Activated CD4-positive, alpha-beta memory T cell treated with anti-CD3 and anti-CD28 coated beads, Interleukin-2, amount 10 ng/mL, durations not matched to agents 7 days and 5 days (primary cell): ENCODE measurements at regions of chr14 and their contacts with region 1.

Region 1: DNA sequence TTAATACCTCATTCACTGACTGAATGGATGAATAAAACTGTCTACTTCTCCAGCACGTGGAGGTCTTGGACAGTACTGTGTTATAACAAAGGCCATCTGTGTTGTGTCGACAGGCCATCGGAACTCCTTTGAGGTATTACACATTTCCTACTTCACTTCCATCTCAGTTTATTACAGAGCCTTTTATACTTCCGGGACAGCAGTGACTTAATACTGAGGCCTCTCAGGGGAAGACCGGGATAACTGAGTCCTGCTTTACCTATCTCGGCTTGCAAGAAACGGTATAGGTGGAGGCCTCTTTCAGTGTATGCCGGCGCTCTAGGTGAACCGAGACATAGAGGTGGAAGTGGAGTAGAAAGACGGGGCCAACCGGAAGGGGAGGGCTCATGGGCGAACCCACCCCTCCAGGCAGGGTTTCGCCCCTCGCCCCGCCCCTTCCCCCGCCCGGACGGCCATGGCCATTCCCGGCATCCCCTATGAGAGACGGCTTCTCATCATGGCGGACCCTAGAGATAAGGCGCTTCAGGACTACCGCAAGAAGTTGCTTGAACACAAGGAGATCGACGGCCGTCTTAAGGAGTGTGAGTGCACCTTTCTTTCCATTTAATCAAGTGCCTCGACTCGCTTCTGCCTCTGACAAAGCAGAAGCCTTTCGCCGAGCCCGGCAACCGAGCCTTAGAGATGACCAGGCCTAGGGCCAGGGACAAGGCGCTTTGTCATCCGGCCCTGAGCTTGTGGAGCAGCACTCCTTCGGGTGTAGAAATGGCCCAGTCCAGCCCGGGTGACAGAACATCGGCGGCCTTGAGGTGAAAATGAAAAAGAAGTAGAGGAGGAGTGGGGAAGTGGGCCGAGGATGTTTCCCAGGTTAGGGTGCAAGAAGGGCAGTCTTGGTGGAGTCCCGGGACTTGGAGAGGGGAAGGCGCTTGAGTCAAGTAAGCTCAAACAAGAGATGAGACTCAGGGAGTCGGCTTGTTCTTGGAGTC is at the start of gene PSMC6:
- DNase-seq: peak; percentile 95
- H3K4me3 Mint-ChIP-seq: peak within 1 kb of the TSS; percentile 92
- H3K27ac Mint-ChIP-seq: peak within 1 kb of the TSS; percentile 91
- H3K4me1 Mint-ChIP-seq: peaks cover 52% of the 10 kb centered on the region
- H3K27me3 Mint-ChIP-seq: no peaks in the 10 kb centered on the region
- total RNA-seq, gene PSMC6: 78.3 to 80.8 TPM

Region 2: DNA sequence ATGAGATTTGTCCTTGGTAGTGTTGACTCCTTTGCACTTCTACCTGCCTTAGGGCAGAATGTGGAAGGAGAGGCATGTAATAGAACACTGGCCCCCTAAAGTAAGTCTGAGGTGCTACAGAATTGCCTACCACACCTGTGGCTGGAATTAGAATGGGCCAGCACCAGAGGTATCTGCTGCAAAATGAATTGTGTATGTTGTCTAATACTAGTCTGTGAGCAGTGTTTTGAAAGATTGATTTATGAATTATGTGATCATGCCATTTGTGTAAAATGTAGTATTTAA is 17.3 kb after region 1 on chr14:
- CTCF ChIA-PET with region 1: interaction called, 6 read pairs
- POLR2A ChIA-PET with region 1: interaction called, 11 read pairs
- DNase-seq: no peak
- H3K4me3 Mint-ChIP-seq: no peak overlapping the region
- H3K27ac Mint-ChIP-seq: no peak overlapping the region
- H3K4me1 Mint-ChIP-seq: peaks cover 19% of the 10 kb centered on the region
- H3K27me3 Mint-ChIP-seq: no peaks in the 10 kb centered on the region

Region 3: DNA sequence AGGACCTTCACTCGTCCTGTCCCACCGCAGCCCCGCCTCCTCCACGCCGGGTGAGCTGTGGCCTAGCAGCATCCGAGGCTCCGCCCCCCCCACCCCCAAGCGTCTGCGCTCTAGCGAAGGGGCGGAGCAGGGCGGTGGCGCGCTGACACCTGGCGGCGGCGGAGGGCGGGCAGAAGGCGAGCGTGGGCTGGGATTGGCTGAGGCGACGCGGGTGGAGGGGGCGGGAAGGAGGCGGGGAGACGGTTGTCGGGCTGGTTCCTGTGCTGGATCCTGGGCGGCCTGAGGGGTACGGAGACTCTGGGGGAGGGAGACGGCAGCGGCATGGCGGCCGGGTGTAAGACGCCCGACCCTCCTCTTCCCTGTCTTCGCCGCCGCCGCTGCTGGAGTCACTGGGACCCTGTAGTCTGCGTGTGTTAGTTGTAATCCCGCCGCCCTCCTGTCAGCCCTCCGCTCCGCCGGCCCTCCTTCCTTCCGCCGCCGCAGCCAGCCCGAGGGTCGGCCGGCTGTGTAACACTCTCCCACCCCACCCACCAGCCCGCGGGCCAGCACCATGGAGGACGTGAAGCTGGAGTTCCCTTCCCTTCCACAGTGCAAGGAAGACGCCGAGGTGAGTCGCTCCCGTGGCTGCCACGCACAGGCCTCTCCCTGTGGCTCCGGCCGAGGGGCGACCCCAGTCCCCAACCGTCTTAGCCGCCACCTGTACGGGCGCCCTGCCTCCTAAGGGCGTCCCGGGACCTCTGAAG is 23.1 kb after region 1 on chr14 and contains the start of gene STYX:
- CTCF ChIA-PET with region 1: no interaction called
- POLR2A ChIA-PET with region 1: interaction called, 11 read pairs
- DNase-seq: peak; percentile 98
- H3K4me3 Mint-ChIP-seq: peak within 1 kb of the TSS; percentile 95
- H3K27ac Mint-ChIP-seq: peak within 1 kb of the TSS; percentile 83
- H3K4me1 Mint-ChIP-seq: peaks cover 37% of the 10 kb centered on the region
- H3K27me3 Mint-ChIP-seq: no peaks in the 10 kb centered on the region
- total RNA-seq, gene STYX: 21.0 to 25.1 TPM

Region 4: DNA sequence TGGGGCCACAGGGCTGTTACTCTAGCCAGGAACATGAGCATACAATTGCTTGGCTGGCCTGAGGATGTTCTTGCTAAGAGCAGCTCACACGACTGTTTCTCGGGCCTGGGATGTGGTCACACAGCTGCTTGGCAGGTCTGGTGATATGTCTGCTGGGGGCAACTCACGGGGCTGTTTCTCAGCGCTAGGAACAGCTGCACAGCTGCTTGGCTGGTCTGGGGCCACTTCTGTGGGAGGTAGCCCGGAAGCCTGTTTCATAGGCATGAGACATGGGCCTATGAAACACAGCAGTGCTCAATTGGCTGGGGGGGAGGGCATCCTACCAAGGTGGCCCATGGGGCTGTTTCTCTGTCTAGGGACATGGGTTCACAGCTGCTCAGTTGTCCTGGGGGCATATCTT is 519.5 kb after region 1 on chr14:
- CTCF ChIA-PET with region 1: no interaction called
- POLR2A ChIA-PET with region 1: no interaction called
- DNase-seq: no peak
- H3K4me3 Mint-ChIP-seq: no peak overlapping the region
- H3K27ac Mint-ChIP-seq: no peak overlapping the region
- H3K4me1 Mint-ChIP-seq: peaks cover 1% of the 10 kb centered on the region
- H3K27me3 Mint-ChIP-seq: no peaks in the 10 kb centered on the region